Activated naive CD4-positive, alpha-beta T cell treated with anti-CD3 and anti-CD28 coated beads for 36 hours (primary cell): ENCODE measurements at regions of chr17 and their contacts with region 1.

Region 1: DNA sequence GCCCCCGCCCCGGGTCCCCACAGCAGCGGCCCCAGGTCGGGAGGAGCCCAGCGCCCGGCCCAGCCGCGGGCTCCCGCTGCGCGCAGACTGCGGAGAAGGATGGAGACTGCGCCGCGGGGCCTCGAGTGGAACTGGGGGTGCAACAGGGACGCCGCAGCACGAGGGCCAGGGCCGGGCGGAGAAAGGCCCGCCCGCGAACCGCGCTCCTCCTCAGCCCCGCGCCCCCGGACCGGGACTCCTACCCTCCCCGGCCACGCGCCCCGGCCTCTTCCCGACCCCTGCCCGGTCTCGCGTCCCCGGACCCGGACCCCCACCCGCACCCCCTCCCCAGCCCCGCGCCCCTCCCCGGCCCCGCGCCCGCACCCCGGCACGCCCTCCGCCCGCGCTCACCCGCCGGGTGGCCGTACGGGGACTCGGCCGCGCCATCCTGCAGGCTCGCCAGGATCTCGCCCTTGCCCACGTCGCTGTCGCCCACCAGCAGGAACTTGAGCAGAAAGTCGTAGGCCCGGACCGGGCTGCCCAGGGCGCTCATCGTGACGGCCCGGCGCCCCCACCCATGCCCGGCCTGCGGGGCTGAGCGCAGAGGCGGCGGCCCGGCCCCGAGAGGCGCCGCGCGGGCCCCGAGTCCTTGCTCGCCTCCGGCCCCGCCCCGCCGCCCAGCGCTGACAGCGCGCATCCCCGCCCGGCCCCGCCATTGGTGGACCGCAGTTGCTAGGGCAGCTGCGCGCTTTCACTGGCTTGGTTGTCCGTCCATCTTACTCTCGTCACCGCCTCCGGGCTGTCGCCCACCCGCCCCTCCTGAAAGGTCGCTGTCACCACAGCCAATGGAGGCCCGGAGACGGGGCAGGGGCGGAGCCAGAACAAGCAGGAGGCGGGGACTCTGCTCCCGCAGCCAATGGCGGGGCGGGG is at the start of gene RAB40B:
- DNase-seq: peak; percentile 96
- H3K4me3 Mint-ChIP-seq: peak within 1 kb of the TSS; percentile 75
- H3K27ac Mint-ChIP-seq: no peak within 1 kb of the TSS
- H3K4me1 Mint-ChIP-seq: peaks cover 9% of the 10 kb centered on the region
- H3K27me3 Mint-ChIP-seq: peaks cover 5% of the 10 kb centered on the region
- total RNA-seq, gene RAB40B: 0.42 to 0.52 TPM

Region 2: DNA sequence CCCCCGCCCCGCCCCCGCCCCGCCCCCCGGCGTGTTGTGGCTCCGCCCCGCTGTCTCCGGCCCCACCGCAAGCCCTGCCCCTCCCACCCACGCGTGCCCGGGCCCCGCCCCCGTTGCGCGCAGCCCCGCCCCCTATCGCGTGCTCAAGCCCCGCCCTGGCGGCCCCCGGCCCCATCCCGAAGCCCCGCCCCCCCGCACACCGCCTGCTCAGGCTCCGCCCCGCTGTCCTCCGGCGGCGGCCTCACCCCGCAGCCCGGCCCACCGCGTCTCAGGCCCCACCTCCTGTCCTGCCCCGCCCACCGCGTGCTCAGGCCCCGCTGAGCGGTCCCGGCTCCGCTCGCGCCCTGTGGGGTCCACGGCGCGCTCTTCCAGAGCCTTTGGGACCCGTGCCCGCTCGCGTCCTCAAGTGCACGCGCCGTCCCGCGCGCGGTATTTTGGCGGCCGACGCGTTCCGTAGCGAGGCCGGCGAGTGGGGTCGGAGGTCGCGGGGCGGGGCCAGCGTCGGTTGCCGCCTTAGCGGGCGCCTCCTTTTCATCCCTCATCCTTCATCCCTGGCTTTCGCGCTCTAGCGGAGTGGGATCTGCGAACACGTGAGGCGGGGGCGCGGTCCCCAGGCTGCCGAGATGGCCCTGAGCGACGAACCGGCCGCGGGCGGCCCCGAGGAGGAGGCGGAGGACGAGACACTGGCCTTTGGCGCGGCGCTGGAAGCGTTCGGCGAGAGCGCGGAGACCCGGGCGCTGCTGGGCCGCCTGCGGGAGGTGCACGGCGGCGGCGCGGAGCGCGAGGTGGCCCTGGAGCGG is 53.5 kb after region 1 on chr17 and contains the start of gene TBCD:
- CTCF ChIA-PET with region 1: no interaction called
- intact Hi-C with region 1: loop called (anchors 5 kb)
- DNase-seq: peak; percentile 90
- H3K4me3 Mint-ChIP-seq: peak within 1 kb of the TSS; percentile 79
- H3K27ac Mint-ChIP-seq: peak within 1 kb of the TSS; percentile 18
- H3K4me1 Mint-ChIP-seq: peaks cover 26% of the 10 kb centered on the region
- H3K27me3 Mint-ChIP-seq: no peaks in the 10 kb centered on the region
- total RNA-seq, gene TBCD: 71.8 to 75.3 TPM